IMR-90 (cell line): ENCODE measurements at regions of chr7 and their contacts with region 1.

Region 1: GRCh38 chr7:151017953-151018420 is 6.3 kb downstream of the ATG9B start:
- DNase-seq: peak; percentile 25
- ATAC-seq: peak; percentile 90
- H3K4me3 ChIP-seq: 0 out of 2 replicates have a peak overlapping the region, but pooled peaks have one; percentile 23
- H3K27ac ChIP-seq: no peak overlapping the region
- H3K4me1 ChIP-seq: peaks cover 3% of the 10 kb centered on the region; the same call in 1 of the 2 replicates
- H3K27me3 ChIP-seq: peaks cover 58% of the 10 kb centered on the region
- CTCF ChIP-seq: peak; percentile 79
- POLR2A ChIP-seq: no peak
- RAD21 ChIP-seq: peak; percentile 53

Region 2: GRCh38 chr7:150962553-150963399 is 55.2 kb before region 1 on chr7:
- CTCF ChIA-PET with region 1: no interaction called
- POLR2A ChIA-PET with region 1: no interaction called
- dilution Hi-C with region 1: no loop called
- in situ Hi-C with region 1: no loop called
- intact Hi-C with region 1: loop called (anchors 2 kb)
- DNase-seq: peak; percentile 37
- ATAC-seq: peak; percentile 91
- H3K4me3 ChIP-seq: no peak overlapping the region
- H3K27ac ChIP-seq: peak overlapping the region; percentile 79
- H3K4me1 ChIP-seq: peaks cover 13% of the 10 kb centered on the region; the same call in 1 of the 2 replicates
- H3K27me3 ChIP-seq: no peaks in the 10 kb centered on the region; the same call in 1 of the 2 replicates
- CTCF ChIP-seq: peak; percentile 90
- POLR2A ChIP-seq: no peak
- RAD21 ChIP-seq: peak; percentile 90

Region 3: DNA sequence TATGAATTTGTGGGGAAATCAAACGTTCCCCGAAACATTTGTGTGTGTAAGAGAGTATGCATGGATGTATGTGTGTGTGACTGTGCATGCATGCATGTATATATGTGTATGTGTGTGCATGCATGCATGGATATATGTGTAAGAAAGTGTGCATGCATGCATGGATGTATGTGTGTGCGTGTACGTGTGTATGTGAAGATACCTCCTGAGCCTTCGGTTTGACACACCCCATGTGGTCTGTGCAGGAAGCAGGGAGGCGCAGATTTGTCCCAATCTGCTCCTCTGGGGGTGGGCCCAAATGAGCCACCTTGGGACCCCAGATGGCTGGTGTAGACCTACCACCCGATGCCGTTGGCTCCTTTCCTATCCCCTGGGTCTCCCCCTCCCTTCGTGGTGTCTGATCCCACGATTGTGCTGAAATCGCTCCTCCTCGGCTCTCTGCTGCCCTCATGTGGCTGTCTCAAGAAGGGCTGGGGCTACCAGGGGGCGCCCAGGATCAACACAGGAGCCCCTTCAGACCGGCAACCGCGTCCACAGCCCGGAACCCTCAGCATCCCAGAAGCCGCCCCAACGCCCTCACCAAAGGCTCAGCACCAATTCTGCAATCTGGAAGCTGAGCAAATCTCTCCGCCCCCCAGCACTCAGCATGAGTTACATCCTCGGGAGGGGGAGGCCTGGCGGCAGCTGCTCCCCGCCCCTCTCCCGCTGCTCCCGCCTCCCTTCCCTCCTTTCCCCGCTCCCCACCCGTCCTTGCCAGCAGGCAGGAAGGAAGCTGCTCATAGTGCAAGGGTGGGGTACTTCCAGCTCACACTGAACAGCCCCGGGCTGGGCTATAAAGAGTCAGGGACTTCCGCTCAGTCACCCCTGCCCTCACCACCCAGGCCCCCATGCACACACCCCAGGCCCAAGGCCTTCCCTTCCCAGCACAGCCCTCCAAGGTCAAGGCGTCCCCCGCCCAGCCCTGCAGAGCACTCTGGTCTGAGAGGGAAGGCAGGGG is 29.5 kb before region 1 on chr7:
- CTCF ChIA-PET with region 1: no interaction called
- POLR2A ChIA-PET with region 1: no interaction called
- dilution Hi-C with region 1: no loop called
- in situ Hi-C with region 1: no loop called
- intact Hi-C with region 1: no loop called
- DNase-seq: no peak
- ATAC-seq: peak; percentile 77
- H3K4me3 ChIP-seq: no peak overlapping the region
- H3K27ac ChIP-seq: no peak overlapping the region
- H3K4me1 ChIP-seq: no peaks in the 10 kb centered on the region; the same call in 1 of the 2 replicates
- H3K27me3 ChIP-seq: peaks cover 6% of the 10 kb centered on the region; the same call in 1 of the 2 replicates
- CTCF ChIP-seq: peak; percentile 73
- POLR2A ChIP-seq: no peak
- RAD21 ChIP-seq: peak; percentile 76